Caco-2 (cell line): ENCODE measurements at regions of chr12 and their contacts with region 1.

Region 1: GRCh38 chr12:92145731-92146496 is at the start of gene BTG1:
- DNase-seq: peak; percentile 98 to 99
- H3K4me3 ChIP-seq: peak within 1 kb of the TSS; percentile 64
- H3K4me3 Mint-ChIP-seq: peak within 1 kb of the TSS; percentile 81
- H3K27ac Mint-ChIP-seq: peak within 1 kb of the TSS; percentile 96
- H3K4me1 ChIP-seq: peaks cover 26% of the 10 kb centered on the region
- H3K4me1 Mint-ChIP-seq: peaks cover 30% of the 10 kb centered on the region
- H3K27me3 ChIP-seq: no peaks in the 10 kb centered on the region
- H3K27me3 Mint-ChIP-seq: no peaks in the 10 kb centered on the region
- CTCF ChIP-seq: no peak
- total RNA-seq, gene BTG1: 23.1 and 27.1 TPM in 2 replicates

Region 2: GRCh38 chr12:91382081-91382543 is 763.8 kb before region 1 on chr12:
- CTCF ChIA-PET with region 1: interaction called, 3 read pairs
- POLR2A ChIA-PET with region 1: no interaction called
- intact Hi-C with region 1: loop called (anchors 1 kb)
- DNase-seq: peak; percentile 71 to 80
- H3K4me3 ChIP-seq: no peak overlapping the region
- H3K4me3 Mint-ChIP-seq: peak overlapping the region; percentile 36
- H3K27ac Mint-ChIP-seq: no peak overlapping the region
- H3K4me1 ChIP-seq: no peaks in the 10 kb centered on the region
- H3K4me1 Mint-ChIP-seq: no peaks in the 10 kb centered on the region
- H3K27me3 ChIP-seq: no peaks in the 10 kb centered on the region; the same call in 1 of the 2 replicates
- H3K27me3 Mint-ChIP-seq: peaks cover 9% of the 10 kb centered on the region
- CTCF ChIP-seq: peak; percentile 84 to 88

Region 3: DNA sequence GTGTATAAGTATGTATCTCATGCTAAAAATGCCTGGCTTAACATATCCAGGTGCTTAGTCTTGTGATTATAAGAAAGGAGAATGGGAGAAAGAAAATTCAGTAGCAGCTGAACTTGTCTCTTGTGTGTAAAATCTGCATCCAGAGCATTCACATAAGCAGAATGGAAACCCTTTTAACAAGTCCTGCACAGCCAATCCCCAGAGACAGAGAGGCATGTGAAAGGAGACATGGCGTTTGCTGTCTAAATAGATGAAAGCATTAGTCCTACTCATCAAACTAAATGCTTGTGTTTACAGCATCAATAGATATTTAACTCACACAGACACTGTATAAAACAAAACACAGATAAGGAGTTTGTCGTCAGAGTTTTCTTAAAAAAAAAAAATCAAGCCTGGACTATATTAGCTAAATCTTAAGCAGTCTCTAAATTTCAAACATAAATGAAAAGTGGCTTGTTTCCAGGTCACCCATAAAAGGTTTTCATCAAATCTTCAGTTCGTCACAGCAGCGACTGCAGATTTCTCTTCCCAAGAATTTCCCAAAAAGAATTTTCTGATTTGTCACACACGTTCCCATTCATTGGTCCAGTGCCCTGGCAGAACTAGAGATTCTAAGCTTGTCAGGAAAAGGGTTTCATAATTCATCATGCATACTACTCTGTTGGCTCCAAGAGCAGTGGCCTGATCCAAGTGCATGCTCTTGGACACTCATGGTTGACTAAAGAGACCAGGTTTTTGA is 249.5 kb before region 1 on chr12:
- CTCF ChIA-PET with region 1: no interaction called
- POLR2A ChIA-PET with region 1: interaction called, 3 read pairs
- intact Hi-C with region 1: loop called (anchors 5 kb)
- DNase-seq: no peak
- H3K4me3 ChIP-seq: no peak overlapping the region
- H3K4me3 Mint-ChIP-seq: no peak overlapping the region
- H3K27ac Mint-ChIP-seq: no peak overlapping the region
- H3K4me1 ChIP-seq: peaks cover 21% of the 10 kb centered on the region
- H3K4me1 Mint-ChIP-seq: peaks cover 22% of the 10 kb centered on the region
- H3K27me3 ChIP-seq: no peaks in the 10 kb centered on the region
- H3K27me3 Mint-ChIP-seq: no peaks in the 10 kb centered on the region
- CTCF ChIP-seq: no peak

Region 4: GRCh38 chr12:92070054-92070863 is 75.7 kb before region 1 on chr12:
- CTCF ChIA-PET with region 1: interaction called, 7 read pairs
- POLR2A ChIA-PET with region 1: interaction called, 23 read pairs
- intact Hi-C with region 1: loop called (anchors 1 kb)
- DNase-seq: peak; percentile 76 to 83
- H3K4me3 ChIP-seq: peak overlapping the region; percentile 9; the same call in 1 of the 2 replicates
- H3K4me3 Mint-ChIP-seq: peak overlapping the region; percentile 63
- H3K27ac Mint-ChIP-seq: peak overlapping the region; percentile 86
- H3K4me1 ChIP-seq: peaks cover 40% of the 10 kb centered on the region
- H3K4me1 Mint-ChIP-seq: peaks cover 20% of the 10 kb centered on the region
- H3K27me3 ChIP-seq: no peaks in the 10 kb centered on the region
- H3K27me3 Mint-ChIP-seq: no peaks in the 10 kb centered on the region
- CTCF ChIP-seq: peak in 1 of 2 experiments; percentile 38

Region 5: DNA sequence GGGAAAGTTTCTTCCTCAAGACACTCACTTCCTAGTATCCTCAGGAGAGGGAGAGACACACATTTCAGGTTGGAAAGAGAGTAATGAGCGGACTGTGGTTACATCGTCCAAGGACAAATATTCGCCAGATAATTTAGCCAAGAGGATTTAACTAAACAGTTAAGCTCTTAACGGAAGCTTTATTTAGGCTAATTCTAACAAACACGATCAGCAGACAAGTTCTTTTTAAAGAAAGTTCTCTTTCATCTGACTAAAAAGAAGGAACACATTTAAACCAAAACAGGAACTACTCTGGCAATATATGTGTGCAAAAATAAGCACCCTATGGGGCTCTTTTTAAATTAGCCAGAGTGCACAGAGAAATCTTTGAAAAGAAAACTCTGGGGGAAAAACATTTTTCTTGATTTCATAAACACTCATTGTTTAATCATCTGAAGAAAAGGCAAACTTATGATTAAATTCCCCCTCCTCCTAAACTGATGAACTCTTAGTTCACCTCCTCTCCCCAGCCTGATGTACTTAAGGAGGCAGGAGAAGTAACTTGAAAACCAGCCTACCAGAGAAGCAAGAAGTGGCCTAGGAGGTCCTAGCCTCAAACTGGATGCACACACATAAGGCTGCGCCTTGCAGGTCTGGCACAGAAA is 13.0 kb after region 1 on chr12:
- CTCF ChIA-PET with region 1: interaction called, 3 read pairs
- POLR2A ChIA-PET with region 1: interaction called, 16 read pairs
- intact Hi-C with region 1: loop called (anchors 1 kb)
- DNase-seq: no peak
- H3K4me3 ChIP-seq: no peak overlapping the region
- H3K4me3 Mint-ChIP-seq: no peak overlapping the region
- H3K27ac Mint-ChIP-seq: no peak overlapping the region
- H3K4me1 ChIP-seq: peaks cover 49% of the 10 kb centered on the region
- H3K4me1 Mint-ChIP-seq: peaks cover 36% of the 10 kb centered on the region
- H3K27me3 ChIP-seq: no peaks in the 10 kb centered on the region
- H3K27me3 Mint-ChIP-seq: no peaks in the 10 kb centered on the region
- CTCF ChIP-seq: no peak

Region 6: GRCh38 chr12:92224685-92225331 is 78.9 kb after region 1 on chr12:
- CTCF ChIA-PET with region 1: no interaction called
- POLR2A ChIA-PET with region 1: no interaction called
- intact Hi-C with region 1: loop called (anchors 5 kb)
- DNase-seq: no peak
- H3K4me3 ChIP-seq: no peak overlapping the region
- H3K4me3 Mint-ChIP-seq: no peak overlapping the region
- H3K27ac Mint-ChIP-seq: no peak overlapping the region
- H3K4me1 ChIP-seq: no peaks in the 10 kb centered on the region; the same call in 1 of the 2 replicates
- H3K4me1 Mint-ChIP-seq: no peaks in the 10 kb centered on the region
- H3K27me3 ChIP-seq: no peaks in the 10 kb centered on the region
- H3K27me3 Mint-ChIP-seq: no peaks in the 10 kb centered on the region
- CTCF ChIP-seq: no peak

Region 7: GRCh38 chr12:92570056-92570753 is 424.3 kb after region 1 on chr12:
- CTCF ChIA-PET with region 1: no interaction called
- POLR2A ChIA-PET with region 1: no interaction called
- intact Hi-C with region 1: loop called (anchors 5 kb)
- DNase-seq: peak; percentile 48 to 71
- H3K4me3 ChIP-seq: no peak overlapping the region
- H3K4me3 Mint-ChIP-seq: no peak overlapping the region
- H3K27ac Mint-ChIP-seq: no peak overlapping the region
- H3K4me1 ChIP-seq: peaks cover 12% of the 10 kb centered on the region
- H3K4me1 Mint-ChIP-seq: peaks cover 7% of the 10 kb centered on the region
- H3K27me3 ChIP-seq: no peaks in the 10 kb centered on the region
- H3K27me3 Mint-ChIP-seq: no peaks in the 10 kb centered on the region
- CTCF ChIP-seq: peak; percentile 54 to 64